HEK293 (cell line): ENCODE measurements at regions of chr20 and their contacts with region 1.

Region 1: DNA sequence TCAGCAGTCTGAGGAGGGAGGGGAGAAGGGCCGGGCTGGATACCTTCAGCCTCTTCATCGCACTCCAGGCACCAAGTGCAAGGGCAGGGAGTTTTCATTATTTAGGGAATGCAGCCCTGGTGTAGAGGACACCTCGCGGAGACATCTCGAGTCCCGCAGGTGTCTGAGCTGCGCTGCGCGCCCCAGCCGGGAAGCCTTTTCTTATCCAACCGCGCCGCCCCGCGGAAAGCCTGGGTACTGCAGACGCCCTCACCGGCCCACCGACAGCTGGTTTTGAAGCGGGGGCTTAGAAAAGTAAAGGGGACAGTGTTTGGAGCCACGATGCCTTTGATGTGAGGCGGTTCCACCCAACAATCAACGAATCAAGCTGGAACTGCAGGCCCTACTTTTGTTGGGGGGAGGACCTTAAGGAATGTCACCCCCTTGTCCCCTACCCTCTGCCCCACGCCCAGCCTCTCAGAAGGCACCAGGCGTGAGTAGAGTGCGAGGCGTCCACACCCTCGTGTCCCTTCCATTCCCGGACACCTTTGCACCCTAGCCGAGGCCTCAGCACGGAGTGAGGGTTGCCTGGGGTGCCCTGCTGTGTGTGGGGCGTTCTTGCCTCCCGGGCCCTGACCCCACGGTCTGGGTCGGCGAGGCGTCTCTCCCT is 8.6 kb downstream of the NKX2-2 start:
- H3K4me3 ChIP-seq: peak overlapping the region; percentile 53
- H3K27ac ChIP-seq: peak overlapping the region; percentile 56; the same call in 1 of the 2 replicates
- H3K4me1 ChIP-seq: no peaks in the 10 kb centered on the region
- CTCF ChIP-seq: peak; percentile 89

Region 2: DNA sequence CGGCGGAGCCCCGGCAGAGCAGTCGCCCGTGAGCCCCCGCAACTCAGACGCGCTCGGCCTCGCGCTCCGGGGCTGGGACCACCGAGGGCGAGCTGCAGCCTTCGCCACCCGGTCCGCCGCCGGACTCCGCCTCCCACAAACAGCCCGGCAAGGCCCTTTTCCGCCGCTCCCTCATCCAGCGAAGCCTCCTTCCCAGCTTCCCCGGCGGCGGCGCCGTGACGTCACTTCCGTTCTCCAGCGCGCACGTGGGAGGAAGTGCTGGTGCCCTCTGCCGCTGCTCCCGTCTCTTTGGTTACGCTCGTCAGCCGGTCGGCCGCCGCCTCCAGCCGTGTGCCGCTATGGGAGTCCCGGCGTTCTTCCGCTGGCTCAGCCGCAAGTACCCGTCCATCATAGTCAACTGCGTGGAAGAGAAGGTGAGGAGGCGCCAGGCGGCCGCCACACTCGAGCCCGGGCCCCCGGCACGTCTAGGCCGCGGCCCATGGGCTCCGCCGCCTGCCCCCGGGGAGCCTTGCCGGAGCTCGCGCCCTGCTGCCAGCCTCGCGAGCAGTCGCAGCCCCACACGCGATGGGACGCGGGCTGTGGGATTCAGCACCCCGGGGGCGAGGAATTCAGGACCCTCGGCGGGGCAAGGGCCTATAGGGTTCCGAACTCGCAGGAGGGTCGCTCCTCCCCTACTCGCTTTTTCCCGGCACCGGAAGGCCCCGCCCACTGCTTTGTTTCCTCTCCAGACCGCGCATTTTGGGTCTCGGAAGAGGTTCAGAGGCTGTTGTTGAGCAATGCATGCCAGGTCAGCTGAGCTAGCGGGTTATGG is 202.0 kb before region 1 on chr20 and contains the start of gene XRN2:
- CTCF ChIA-PET with region 1: no interaction called
- POLR2A ChIA-PET with region 1: no interaction called
- H3K4me3 ChIP-seq: peak within 1 kb of the TSS; percentile 86
- H3K27ac ChIP-seq: peak within 1 kb of the TSS; percentile 92
- H3K4me1 ChIP-seq: peaks cover 4% of the 10 kb centered on the region; the same call in 1 of the 2 replicates
- CTCF ChIP-seq: peak; percentile 88

Region 3: DNA sequence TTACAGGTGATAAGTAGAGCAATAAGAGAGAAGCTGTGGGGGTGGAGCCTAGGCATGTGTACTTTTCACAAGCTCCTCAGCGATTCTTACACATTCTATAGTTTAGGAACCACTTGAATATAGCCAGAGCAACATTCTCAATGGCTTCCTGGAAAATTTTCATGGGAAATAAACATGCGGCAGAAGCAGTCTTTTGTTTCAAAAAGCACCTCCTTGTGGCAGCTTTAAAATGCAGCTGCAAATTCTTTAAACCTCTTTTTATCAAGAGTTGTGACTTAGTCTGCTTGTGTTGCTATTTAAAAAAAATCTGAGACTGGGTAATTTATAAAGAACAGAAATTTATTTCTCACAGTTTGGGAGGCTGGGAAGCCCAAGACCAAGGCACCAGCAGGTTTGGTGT is 15.2 kb before region 1 on chr20:
- CTCF ChIA-PET with region 1: interaction called, 15 read pairs
- POLR2A ChIA-PET with region 1: no interaction called
- H3K4me3 ChIP-seq: no peak overlapping the region
- H3K27ac ChIP-seq: no peak overlapping the region
- H3K4me1 ChIP-seq: no peaks in the 10 kb centered on the region
- CTCF ChIP-seq: no peak

Region 4: DNA sequence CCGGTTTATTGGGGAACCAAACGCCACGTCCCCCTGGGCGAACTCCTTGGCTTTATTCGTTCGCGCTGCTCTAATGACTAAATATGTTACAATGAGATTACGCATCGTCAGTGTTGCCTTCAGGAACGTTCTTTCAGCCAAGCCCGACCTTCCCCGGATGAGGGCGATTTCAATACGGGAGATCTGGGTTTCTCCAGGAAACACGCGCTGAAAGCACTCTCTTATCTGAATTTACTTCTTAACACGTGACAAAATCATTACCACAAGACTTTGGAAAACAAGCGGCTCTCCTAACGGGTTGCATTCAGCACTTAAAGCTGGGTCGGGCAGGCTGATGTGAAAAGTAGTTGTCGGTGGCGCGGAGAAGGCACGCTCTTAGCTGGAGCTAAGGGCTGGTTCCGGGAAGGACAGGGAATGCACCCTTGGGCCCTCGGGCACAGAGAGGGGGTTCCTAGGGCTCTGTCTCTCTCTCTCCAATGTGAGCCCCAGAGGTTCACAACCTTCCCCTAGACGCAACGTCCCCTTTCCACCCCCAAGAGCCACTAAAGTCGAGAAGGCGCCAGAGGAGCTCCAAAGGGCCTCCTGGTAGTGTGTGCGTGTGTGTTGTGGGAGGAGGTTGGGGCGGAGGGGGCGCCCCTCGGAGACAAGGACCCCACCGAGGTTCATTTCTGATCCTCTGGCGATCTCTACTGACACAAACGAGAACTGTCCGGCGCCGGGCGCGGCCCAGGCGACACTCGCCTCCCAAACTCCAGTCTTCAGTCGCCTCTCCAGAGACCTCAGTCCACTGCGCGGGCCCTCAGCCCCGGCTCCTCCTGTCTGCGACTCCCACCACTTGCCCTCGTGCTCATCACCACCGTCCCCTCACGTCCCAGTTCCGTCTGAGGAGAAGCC is 15.7 kb after region 1 on chr20:
- CTCF ChIA-PET with region 1: interaction called, 12 read pairs
- POLR2A ChIA-PET with region 1: no interaction called
- H3K4me3 ChIP-seq: peak overlapping the region; percentile 50
- H3K27ac ChIP-seq: peak overlapping the region; percentile 72; the same call in 1 of the 2 replicates
- H3K4me1 ChIP-seq: peaks cover 3% of the 10 kb centered on the region; the same call in 1 of the 2 replicates
- CTCF ChIP-seq: peak; percentile 94

Region 5: DNA sequence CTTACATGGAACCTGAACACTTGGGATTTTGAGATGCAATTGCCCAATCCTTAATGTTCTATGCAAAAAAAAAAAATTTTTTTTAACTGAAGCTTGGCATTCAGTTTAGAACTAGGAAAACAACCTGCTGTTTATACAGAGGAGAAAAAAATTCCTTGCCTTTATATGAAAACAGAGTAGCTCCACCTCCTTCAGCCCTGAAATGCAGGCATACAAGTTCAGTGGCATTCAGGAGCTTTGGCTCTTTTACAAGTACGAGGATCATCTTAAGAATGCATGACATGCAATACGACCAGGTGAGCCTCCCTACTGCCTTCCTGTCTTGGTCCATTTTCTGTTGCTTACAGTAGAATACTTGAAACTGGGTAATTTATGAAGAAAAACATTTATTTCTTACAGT is 220.6 kb after region 1 on chr20:
- CTCF ChIA-PET with region 1: no interaction called
- POLR2A ChIA-PET with region 1: no interaction called
- H3K4me3 ChIP-seq: no peak overlapping the region
- H3K27ac ChIP-seq: no peak overlapping the region
- H3K4me1 ChIP-seq: no peaks in the 10 kb centered on the region
- CTCF ChIP-seq: no peak

Region 6: GRCh38 chr20:21832442-21833385 is 327.4 kb after region 1 on chr20:
- CTCF ChIA-PET with region 1: no interaction called
- POLR2A ChIA-PET with region 1: no interaction called
- H3K4me3 ChIP-seq: no peak overlapping the region
- H3K27ac ChIP-seq: no peak overlapping the region
- H3K4me1 ChIP-seq: no peaks in the 10 kb centered on the region
- CTCF ChIP-seq: no peak